ENCODE measurements at regions of chr9 and their contacts with region 1.

Region 1: GRCh38 chr9:137046098-137046787 is at the start of gene NPDC1:
- DNase-seq: peak; percentile 82
- H3K4me3 Mint-ChIP-seq: peak within 1 kb of the TSS; percentile 74
- H3K27ac Mint-ChIP-seq: no peak within 1 kb of the TSS
- H3K4me1 Mint-ChIP-seq: no peaks in the 10 kb centered on the region
- H3K27me3 Mint-ChIP-seq: no peaks in the 10 kb centered on the region
- CTCF ChIP-seq: peak; percentile 87
- total RNA-seq, gene NPDC1: 161 and 171 TPM in 2 replicates

Region 2: DNA sequence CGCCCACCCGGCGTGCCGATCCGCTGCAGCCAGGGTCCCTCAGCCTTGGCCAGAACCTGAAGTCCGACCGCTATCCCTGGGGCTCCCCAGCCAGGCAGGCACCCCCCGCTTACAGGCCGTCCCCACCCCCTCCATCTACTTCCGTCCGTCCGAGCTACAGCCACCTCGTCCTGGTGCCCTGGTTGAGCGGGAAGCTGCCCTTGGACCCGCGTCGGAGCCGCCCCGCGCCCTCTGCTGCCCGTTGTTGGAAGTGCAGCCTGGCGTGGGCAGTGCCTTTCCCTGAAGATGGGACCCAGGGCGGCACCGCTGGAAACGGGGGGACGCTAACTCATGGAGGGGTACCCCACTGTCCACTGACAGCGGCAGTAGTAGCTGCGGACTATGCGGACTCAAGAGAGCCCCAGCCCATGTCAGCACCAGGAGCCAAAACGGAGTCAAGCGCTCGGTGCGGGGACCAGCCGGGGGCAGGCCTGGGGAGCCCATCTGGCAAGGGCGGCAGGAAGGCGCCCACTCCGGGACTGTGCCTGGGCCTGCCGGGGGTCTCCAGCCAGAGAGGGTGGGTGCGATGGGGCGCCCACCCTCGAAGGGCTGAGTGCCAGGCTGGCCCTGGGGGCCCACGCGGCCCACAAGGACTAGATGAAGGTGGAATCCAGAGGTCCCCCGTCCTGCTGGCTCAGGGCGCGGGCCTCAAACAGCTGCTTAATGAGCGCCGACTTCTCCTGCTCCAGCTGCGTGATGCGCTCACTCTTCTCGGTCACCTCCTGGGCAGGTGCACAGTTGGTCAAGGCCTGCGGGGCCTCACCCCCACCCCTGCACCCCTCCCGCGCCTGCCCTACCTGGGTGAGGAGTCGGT is 18.0 kb after region 1 on chr9:
- CTCF ChIA-PET with region 1: interaction called, 170 read pairs
- POLR2A ChIA-PET with region 1: interaction called, 19 read pairs
- intact Hi-C with region 1: loop called (anchors 1 kb)
- DNase-seq: peak; percentile 68
- H3K4me3 Mint-ChIP-seq: no peak overlapping the region
- H3K27ac Mint-ChIP-seq: no peak overlapping the region
- H3K4me1 Mint-ChIP-seq: peaks cover 17% of the 10 kb centered on the region
- H3K27me3 Mint-ChIP-seq: no peaks in the 10 kb centered on the region
- CTCF ChIP-seq: peak; percentile 96